B cell (primary cell): ENCODE measurements at regions of chr15 and their contacts with region 1.

Region 1: DNA sequence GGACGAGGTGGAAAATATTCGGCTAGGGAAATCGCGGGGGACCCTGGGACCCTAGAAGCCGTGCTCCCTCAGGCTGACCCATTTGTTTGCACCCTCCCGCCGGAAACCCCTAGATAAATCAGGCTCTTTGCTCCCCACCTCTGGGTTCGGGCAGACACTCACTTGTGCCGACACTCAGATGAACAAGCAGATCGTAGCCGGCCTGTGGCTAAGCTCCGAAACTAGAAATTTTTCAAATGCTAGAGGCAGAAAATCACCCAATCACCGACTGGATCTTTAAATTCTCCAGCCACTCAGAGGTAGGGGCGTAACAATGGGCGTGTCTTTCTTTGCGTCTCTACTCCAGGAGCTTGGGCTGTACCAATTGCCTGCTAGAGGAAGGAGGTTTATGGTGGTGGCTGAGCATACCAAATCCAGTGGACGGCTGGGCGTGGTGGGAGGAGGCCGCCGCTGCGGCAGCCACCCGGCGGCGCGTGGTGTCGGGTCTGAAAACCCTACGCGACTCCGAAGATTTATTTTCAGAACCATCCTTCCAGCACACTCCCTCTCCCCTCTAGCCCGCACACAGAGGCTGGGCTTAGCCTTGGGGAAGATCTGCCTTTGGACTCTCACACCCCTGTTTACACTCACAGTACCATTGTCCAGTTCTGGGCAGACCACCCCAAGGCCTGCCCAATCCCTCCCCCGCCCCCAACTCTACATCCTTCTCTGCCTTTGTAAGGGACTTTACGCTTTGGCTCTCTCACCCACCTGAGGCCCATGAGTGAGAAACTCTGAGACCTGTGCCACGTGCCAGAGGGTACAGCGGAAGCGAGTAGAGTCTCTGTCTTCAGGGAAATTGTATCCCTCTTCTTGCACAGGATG is at the start of gene PIF1:
- DNase-seq: peak; percentile 94
- ATAC-seq: peak; percentile 95
- H3K4me3 ChIP-seq: peak within 1 kb of the TSS; percentile 42 to 73 (median 56)
- H3K4me3 Mint-ChIP-seq: peak within 1 kb of the TSS; percentile 91
- H3K27ac ChIP-seq: peak within 1 kb of the TSS; percentile 31 to 73
- H3K27ac Mint-ChIP-seq: peak within 1 kb of the TSS; percentile 89
- H3K4me1 ChIP-seq: peaks cover 22 to 33% of the 10 kb centered on the region in 2 donors
- H3K4me1 Mint-ChIP-seq: peaks cover 31% of the 10 kb centered on the region
- H3K27me3 ChIP-seq: peaks cover 0 to 14% (median 2%) of the 10 kb centered on the region in 4 experiments
- H3K27me3 Mint-ChIP-seq: no peaks in the 10 kb centered on the region
- CTCF ChIP-seq: no peak
- total RNA-seq, gene PIF1: 2.0 and 2.8 TPM in 2 replicates

Region 2: DNA sequence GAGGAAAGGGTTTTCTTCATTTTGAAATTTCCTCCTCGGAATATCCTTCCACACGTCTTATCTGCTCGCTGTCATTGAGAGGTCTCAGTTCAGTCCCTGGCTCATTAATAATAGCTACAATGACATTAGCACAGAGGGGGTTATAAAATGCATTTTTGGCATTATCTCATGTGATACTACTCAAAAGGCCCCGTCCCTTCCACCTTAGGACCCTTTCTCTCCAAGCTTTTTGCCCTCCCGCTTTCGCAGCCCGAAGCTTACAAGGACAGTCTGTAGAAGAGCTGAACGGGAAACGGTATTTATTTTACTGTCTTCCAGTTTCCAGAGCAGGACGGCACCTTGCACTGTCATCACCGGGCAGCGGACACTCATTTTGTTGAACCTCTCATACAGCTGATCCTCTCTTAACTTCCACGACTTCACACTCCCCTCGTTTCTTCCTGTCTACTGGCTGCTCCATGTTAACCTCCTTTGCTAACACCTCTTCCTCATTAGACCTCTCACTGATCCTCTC is 10.4 kb after region 1 on chr15:
- CTCF ChIA-PET with region 1: interaction called, 17 read pairs
- POLR2A ChIA-PET with region 1: interaction called, 5 read pairs
- intact Hi-C with region 1: loop called (anchors 1 kb)
- DNase-seq: no peak
- ATAC-seq: no peak
- H3K4me3 ChIP-seq: no peak overlapping the region
- H3K4me3 Mint-ChIP-seq: peak overlapping the region; percentile 71
- H3K27ac ChIP-seq: no peak overlapping the region
- H3K27ac Mint-ChIP-seq: peak overlapping the region; percentile 69
- H3K4me1 ChIP-seq: peaks cover 10 to 18% of the 10 kb centered on the region in 2 donors
- H3K4me1 Mint-ChIP-seq: peaks cover 27% of the 10 kb centered on the region
- H3K27me3 ChIP-seq: no peaks in the 10 kb centered on the region
- H3K27me3 Mint-ChIP-seq: no peaks in the 10 kb centered on the region
- CTCF ChIP-seq: peak; percentile 62

Region 3: DNA sequence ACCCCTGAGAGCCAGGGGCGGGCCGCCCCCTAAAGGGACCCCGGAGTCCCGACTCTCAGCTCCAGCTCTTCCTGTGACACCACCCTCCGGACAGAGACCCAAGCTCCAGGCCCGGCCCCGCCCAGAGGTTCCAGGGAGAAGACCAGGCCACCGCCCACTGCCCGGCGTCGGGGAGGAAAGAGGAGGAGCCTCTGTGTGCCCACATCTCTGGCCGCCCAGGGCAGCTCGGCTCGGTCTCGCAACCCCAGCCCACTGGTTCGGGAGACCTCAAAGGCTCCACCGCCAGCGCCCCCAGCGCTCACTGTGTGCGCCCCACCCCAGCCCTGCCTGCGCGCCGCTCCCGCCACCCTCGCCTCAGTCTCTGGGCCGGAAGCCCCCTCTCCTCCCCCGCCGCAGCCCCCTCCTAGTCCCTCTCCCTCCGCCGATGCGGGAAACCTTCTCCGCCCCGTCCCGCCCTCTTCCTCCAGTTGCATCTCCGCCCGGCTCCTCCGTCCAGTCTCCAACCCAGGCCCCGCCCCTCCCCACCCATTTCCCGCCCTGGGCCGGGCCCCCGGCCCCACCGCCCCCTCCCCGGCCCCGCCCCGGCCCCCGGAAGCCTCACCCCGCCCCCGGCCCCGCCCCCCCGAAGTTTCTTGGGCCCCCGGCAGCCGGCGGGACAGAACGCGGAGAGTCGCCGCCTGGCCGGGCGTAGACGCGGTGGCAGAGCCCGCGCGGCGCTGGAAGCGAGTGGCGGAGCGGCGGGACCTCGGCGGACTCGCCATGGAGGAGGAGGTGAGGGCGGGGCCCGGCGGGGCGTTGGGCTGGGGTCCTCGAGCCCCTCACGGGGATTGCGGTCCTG is 15.8 kb after region 1 on chr15 and contains the start of gene PLEKHO2:
- CTCF ChIA-PET with region 1: interaction called, 17 read pairs
- POLR2A ChIA-PET with region 1: interaction called, 5 read pairs
- intact Hi-C with region 1: loop called (anchors 1 kb)
- DNase-seq: peak; percentile 90
- ATAC-seq: peak; percentile 76
- H3K4me3 ChIP-seq: peak within 1 kb of the TSS; percentile 67 to 88 (median 72)
- H3K4me3 Mint-ChIP-seq: peak within 1 kb of the TSS; percentile 91
- H3K27ac ChIP-seq: peak within 1 kb of the TSS; percentile 65 to 85
- H3K27ac Mint-ChIP-seq: peak within 1 kb of the TSS; percentile 84
- H3K4me1 ChIP-seq: peaks cover 45 to 53% of the 10 kb centered on the region in 2 donors
- H3K4me1 Mint-ChIP-seq: peaks cover 58% of the 10 kb centered on the region
- H3K27me3 ChIP-seq: no peaks in the 10 kb centered on the region
- H3K27me3 Mint-ChIP-seq: no peaks in the 10 kb centered on the region
- CTCF ChIP-seq: peak; percentile 53
- total RNA-seq, gene PLEKHO2: 23.1 and 25.4 TPM in 2 replicates